Vagina (tissue), 2 donors: ENCODE measurements at regions of chr15 and their contacts with region 1.

Region 1: DNA sequence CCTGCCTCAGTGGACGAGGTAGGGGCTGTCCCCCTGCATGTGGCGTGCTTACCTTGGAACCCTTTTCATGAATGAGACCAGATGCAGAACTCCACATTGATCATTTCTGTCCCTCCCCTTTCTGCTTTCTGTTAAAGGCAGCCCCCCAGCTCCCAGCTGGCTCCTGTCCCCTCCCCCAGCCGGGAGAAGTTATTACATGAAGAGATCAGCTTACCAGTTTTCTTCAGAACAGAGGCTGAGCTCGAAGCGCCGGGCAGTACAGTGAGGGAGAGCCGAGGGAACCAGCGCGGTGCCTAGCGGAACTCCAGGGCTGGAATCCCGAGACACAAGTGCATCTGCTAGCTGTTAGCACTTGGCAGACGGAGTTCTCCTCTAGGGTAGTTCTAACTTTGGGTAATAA is 263.3 kb upstream of the NR2E3 start:
- DNase-seq: no peak
- H3K4me3 ChIP-seq: peak overlapping the region; percentile 12 to 42
- H3K27ac ChIP-seq: peak overlapping the region; percentile 21
- H3K4me1 ChIP-seq: peaks cover 33% of the 10 kb centered on the region
- H3K27me3 ChIP-seq: no peaks in the 10 kb centered on the region
- CTCF ChIP-seq: no peak
- POLR2A ChIP-seq: no peak

Region 2: DNA sequence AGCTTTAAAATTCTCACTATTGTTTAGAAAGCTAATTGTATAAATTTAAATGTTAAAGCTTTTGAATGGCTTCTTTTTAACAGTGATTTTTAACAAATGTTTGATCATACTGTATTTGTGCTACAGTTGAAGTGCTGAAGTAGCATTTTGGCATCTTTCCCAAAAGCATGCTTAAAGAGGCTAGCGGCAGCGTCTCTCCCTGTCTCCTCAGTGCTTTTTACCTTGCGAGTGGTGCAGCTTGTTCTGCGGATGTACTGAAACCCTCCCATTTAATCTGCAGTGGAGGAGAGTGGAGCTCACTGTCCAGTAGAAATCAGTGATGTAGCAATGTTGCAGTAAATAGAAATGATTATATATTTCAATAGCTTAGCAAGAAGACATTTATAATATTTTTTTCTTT is 610.7 kb before region 1 on chr15:
- intact Hi-C with region 1: loop called (anchors 10 kb)
- DNase-seq: no peak
- H3K4me3 ChIP-seq: no peak overlapping the region
- H3K27ac ChIP-seq: no peak overlapping the region
- H3K4me1 ChIP-seq: no peaks in the 10 kb centered on the region
- H3K27me3 ChIP-seq: no peaks in the 10 kb centered on the region
- CTCF ChIP-seq: no peak
- POLR2A ChIP-seq: no peak

Region 3: DNA sequence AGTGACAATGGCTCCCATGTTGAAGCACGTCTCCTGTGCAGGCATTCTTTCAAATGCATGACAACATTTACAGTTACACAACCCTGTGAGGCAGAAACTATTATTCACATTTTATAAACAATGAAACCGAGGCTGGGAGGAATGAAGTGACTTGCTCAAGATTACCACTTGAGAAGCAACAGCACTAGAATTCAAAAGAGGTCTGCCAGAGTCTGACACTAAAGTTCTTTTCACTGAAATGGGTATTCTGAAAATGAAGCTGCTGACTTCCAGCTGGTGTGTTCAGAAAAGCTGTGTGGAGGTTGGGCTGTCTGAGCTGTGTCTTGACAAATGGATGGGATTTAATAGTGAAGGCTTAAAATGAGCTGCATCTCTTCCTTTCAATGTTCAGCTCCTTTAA is 327.4 kb before region 1 on chr15:
- intact Hi-C with region 1: no loop called
- DNase-seq: no peak
- H3K4me3 ChIP-seq: no peak overlapping the region
- H3K27ac ChIP-seq: no peak overlapping the region
- H3K4me1 ChIP-seq: peaks cover 45% of the 10 kb centered on the region
- H3K27me3 ChIP-seq: no peaks in the 10 kb centered on the region
- CTCF ChIP-seq: no peak
- POLR2A ChIP-seq: no peak

Region 4: DNA sequence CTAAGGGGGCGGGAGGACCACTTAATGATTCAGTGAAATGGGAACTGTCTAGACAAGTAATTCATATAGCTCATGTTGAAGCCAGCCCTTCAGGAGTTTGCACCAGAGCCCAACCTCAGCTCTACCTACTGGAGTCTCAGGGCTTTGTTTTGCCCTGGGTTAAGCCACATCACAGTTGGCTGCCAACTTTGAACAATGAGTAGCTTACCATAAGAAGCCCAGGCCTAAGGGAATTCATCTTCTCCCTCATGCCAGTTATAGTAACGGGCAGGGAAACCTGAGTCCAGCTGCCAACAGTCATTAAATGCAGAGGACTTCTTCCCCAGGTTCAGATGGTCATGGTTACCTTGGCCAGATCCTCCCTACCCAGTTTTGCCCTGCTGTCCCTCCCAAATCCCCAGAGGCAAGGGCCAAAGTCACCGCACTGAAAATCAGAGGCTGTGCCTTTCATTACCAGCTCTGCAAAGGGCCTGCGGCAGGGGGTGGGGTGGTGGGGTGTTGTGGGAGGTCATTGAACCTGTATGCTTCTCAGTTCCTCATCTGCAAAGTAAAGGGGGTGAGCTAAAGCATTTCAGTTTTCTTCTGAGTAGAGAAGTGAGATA is 38.8 kb before region 1 on chr15:
- intact Hi-C with region 1: no loop called
- DNase-seq: no peak
- H3K4me3 ChIP-seq: no peak overlapping the region
- H3K27ac ChIP-seq: no peak overlapping the region
- H3K4me1 ChIP-seq: peaks cover 17% of the 10 kb centered on the region
- H3K27me3 ChIP-seq: no peaks in the 10 kb centered on the region
- CTCF ChIP-seq: no peak
- POLR2A ChIP-seq: no peak